Natural killer cell (primary cell): ENCODE measurements at regions of chr11 and their contacts with region 1.

Region 1: DNA sequence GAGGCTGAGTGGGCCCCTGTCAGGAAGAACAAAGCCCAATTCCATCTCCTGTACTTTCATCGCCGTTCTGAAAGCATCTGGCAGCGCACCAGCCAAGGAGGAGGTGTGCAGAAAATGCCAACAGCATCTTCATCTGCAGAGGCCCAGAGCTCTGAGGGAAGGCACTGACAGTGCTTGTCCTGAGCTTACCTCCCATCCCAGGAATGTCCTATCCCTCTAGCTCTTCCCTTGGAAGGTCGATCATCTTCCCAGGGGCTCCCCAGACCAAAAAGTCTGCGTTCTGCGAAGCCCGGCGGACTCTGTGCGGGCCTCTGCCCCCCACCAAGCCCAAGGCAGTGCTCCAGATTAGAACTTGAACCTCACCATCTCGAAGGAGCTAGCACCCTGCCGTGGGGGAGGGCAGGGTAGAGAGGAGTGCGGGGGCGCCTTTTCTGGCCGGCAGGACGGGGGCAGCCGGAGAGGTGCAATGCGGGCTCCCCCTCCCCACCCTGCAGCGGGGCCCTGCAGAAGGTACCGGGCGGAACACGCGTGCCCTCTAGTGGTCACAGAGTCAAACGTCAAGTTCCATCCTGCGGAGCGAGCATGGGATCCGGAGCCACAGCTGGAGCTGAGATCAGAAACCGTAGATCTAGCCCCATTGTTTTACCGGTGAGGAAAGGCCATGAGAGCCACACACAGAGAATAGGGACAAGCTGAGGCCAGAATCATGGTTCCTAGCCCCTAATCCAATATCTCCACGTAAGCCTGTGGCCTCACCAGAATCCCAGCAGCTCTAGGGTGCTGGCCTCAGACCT is 5.0 kb downstream of the SCN2B start:
- DNase-seq: peak; percentile 62 to 89
- ATAC-seq: peak; percentile 76 to 92 (median 84)
- H3K4me3 ChIP-seq: no peak overlapping the region
- H3K4me3 Mint-ChIP-seq: no peak overlapping the region
- H3K27ac ChIP-seq: no peak overlapping the region
- H3K27ac Mint-ChIP-seq: no peak overlapping the region
- H3K4me1 ChIP-seq: peaks cover 7% of the 10 kb centered on the region
- H3K4me1 Mint-ChIP-seq: no peaks in the 10 kb centered on the region
- H3K27me3 ChIP-seq: no peaks in the 10 kb centered on the region
- H3K27me3 Mint-ChIP-seq: peaks cover 20% of the 10 kb centered on the region in 2 donors
- CTCF ChIP-seq: peak; percentile 91

Region 2: GRCh38 chr11:117426269-117426685 is 745.2 kb before region 1 on chr11:
- intact Hi-C with region 1: loop called (anchors 5 kb)
- DNase-seq: peak; percentile 56 to 76
- ATAC-seq: peak; percentile 44 to 71 (median 59)
- H3K4me3 ChIP-seq: no peak overlapping the region
- H3K4me3 Mint-ChIP-seq: no peak overlapping the region
- H3K27ac ChIP-seq: no peak overlapping the region
- H3K27ac Mint-ChIP-seq: no peak overlapping the region
- H3K4me1 ChIP-seq: peaks cover 9% of the 10 kb centered on the region
- H3K4me1 Mint-ChIP-seq: peaks cover 7 to 14% of the 10 kb centered on the region in 2 donors
- H3K27me3 ChIP-seq: no peaks in the 10 kb centered on the region
- H3K27me3 Mint-ChIP-seq: peaks cover 8 to 15% of the 10 kb centered on the region in 2 donors
- CTCF ChIP-seq: peak; percentile 84

Region 3: GRCh38 chr11:117807482-117808327 is 363.8 kb before region 1 on chr11:
- intact Hi-C with region 1: loop called (anchors 10 kb)
- DNase-seq: peak; percentile 74 to 88
- ATAC-seq: peak; percentile 46 to 91 (median 83)
- H3K4me3 ChIP-seq: no peak overlapping the region
- H3K4me3 Mint-ChIP-seq: no peak overlapping the region
- H3K27ac ChIP-seq: no peak overlapping the region
- H3K27ac Mint-ChIP-seq: no peak overlapping the region
- H3K4me1 ChIP-seq: peaks cover 15% of the 10 kb centered on the region
- H3K4me1 Mint-ChIP-seq: no peaks in the 10 kb centered on the region
- H3K27me3 ChIP-seq: no peaks in the 10 kb centered on the region
- H3K27me3 Mint-ChIP-seq: peaks cover 0 to 18% of the 10 kb centered on the region in 2 donors
- CTCF ChIP-seq: peak; percentile 98

Region 4: DNA sequence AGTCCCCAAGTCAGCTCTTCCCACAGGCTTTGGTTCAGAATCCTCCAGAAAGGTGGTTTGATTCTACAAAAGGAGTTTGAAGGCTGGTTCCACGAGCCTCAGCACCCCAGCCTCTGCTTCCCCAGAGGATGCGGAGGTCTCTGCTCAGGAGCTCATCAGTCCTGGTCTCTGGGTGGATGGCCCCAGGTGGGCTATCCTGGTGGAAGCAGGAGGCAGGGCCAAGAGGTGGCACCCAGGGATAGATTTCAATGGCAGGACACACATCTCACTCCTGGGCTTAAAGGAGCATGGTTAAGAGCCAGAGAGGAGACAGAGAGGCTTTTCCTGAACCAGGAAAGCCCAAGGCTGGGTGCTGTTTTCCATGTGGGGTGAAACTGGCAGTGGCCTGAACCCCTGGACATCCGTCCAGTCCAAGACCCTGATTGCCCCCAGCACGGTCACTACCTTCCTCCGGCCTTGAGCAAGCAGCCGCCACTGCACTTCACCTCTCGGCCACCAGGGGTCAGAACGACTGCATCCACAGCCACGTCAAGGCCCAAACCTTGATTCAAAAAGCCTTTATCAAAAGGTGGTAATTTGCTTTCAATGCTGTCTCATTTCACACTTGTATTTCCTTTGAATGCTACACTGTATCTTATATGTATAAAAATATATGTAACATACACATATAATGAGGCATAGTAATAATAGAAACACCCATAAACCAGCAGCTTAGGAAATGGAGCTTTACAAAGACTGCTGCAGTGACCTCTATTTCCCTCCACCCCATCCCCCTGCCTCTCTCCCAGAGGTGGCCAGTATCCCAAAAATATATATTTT is 327.6 kb before region 1 on chr11:
- intact Hi-C with region 1: loop called (anchors 5 kb)
- DNase-seq: peak; percentile 78 to 90
- ATAC-seq: peak; percentile 69 to 94 (median 86)
- H3K4me3 ChIP-seq: no peak overlapping the region
- H3K4me3 Mint-ChIP-seq: no peak overlapping the region
- H3K27ac ChIP-seq: no peak overlapping the region
- H3K27ac Mint-ChIP-seq: no peak overlapping the region
- H3K4me1 ChIP-seq: peaks cover 17% of the 10 kb centered on the region
- H3K4me1 Mint-ChIP-seq: no peaks in the 10 kb centered on the region
- H3K27me3 ChIP-seq: no peaks in the 10 kb centered on the region
- H3K27me3 Mint-ChIP-seq: no peaks in the 10 kb centered on the region
- CTCF ChIP-seq: peak; percentile 96

Region 5: GRCh38 chr11:117919781-117920221 is 251.7 kb before region 1 on chr11:
- intact Hi-C with region 1: no loop called
- DNase-seq: no peak
- ATAC-seq: no peak
- H3K4me3 ChIP-seq: no peak overlapping the region
- H3K4me3 Mint-ChIP-seq: no peak overlapping the region
- H3K27ac ChIP-seq: no peak overlapping the region
- H3K27ac Mint-ChIP-seq: no peak overlapping the region
- H3K4me1 ChIP-seq: no peaks in the 10 kb centered on the region
- H3K4me1 Mint-ChIP-seq: peaks cover 0 to 13% of the 10 kb centered on the region in 2 donors
- H3K27me3 ChIP-seq: no peaks in the 10 kb centered on the region
- H3K27me3 Mint-ChIP-seq: no peaks in the 10 kb centered on the region
- CTCF ChIP-seq: no peak

Region 6: DNA sequence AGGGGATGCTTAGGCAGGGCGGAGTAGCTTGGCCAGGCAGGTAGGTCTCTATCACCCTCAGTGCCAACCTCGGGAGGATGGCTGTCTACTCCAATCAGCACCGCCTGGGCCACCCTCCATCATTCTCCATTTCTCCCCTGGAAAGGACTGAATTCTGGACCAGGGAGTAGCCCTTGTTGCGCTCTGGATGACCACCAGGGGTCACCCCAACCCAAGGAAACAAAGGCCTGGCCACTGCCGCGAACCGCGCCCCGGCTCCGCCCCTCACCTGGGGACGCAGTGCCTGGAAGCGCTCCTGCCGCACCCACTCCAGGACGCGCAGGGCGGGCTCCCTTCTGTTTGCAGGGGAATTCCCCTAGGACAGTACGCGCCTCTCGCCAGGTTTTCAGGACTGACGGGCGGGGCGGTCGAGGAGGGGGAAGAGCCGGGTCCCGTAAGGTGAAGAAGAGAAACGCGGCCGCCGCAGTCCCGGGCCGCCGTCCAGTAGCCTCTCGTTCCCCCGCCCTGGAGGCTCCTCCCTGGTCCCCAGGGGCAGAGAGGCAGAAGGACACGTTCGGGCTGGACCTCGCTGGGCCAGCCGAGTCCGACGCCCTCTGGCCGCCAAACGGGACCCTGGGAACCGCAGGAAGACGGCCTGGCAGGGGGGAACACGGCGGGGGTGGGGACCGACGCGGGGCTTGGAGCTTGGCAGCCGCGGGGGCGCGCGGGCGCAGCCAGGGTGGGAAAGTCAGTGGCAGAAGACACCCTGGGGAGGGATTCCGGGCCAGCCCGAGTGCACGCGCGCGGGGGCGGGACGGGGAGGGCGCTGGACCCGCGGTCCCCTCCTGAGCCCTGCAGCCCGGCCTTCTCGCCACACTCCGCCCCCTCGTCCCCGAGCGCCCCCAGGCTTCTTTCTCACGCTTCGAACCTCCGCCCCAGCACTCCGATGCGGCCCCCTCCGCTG is 25.9 kb before region 1 on chr11:
- intact Hi-C with region 1: loop called (anchors 1 kb)
- DNase-seq: peak; percentile 69 to 93
- ATAC-seq: peak; percentile 88 to 95 (median 94)
- H3K4me3 ChIP-seq: peak overlapping the region; percentile 63
- H3K4me3 Mint-ChIP-seq: peak overlapping the region; percentile 82
- H3K27ac ChIP-seq: no peak overlapping the region
- H3K27ac Mint-ChIP-seq: no peak overlapping the region
- H3K4me1 ChIP-seq: peaks cover 10% of the 10 kb centered on the region
- H3K4me1 Mint-ChIP-seq: peaks cover 0 to 4% of the 10 kb centered on the region in 2 donors
- H3K27me3 ChIP-seq: peaks cover 2% of the 10 kb centered on the region
- H3K27me3 Mint-ChIP-seq: peaks cover 47 to 72% of the 10 kb centered on the region in 2 donors
- CTCF ChIP-seq: peak; percentile 89